ENCODE measurements at regions of chr3 and their contacts with region 1.

Region 1: GRCh38 chr3:134485718-134486576 is at the starts of genes ANAPC13 and CEP63:
- DNase-seq: peak; percentile 93
- CTCF ChIP-seq: no peak

Region 2: DNA sequence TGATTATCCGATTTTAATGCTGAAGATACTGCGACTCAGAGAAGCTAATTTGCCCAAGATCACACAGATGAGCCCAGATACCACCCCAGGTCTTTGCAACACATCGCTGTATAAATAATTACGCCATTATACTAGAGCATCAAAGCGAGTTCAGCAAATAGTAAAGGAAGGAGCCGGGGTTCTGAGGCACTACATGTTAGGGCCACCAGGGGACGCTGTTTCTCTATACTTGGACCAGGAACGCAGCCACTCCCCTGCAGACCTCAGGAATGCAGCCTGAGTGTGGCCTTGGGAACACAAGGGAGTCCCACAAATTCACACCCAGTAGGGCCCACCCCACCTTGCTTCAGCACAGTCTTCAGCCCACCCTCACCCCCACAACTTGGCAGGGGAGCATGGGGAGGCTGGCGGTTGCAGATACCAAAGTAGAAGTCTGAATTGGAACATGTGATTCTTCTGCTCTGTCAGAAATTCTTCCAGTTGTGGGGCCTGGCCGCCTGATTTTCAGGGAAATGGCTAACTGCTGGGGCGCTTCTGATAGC is 177.5 kb before region 1 on chr3:
- CTCF ChIA-PET with region 1: interaction called, 154 read pairs
- POLR2A ChIA-PET with region 1: interaction called, 5 read pairs
- DNase-seq: peak; percentile 75
- CTCF ChIP-seq: peak; percentile 97

Region 3: DNA sequence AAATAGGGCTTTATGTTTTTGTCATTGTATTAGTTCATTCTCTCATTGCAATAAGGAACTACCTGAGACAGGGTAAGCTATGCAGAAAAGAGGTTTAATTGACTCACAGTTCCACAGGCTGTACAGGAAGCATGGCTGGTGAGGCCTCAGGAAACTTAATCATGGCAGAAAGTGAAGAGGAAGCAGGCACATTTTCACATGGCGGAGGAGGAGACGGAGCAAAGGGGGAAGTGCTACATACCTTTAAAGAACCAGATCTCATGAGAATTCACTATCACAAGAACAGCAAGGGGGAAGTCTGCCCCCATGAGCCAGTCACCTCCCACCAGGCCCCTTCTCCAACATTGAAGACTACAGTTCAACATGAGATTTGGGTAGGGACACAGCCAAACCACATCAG is 25.6 kb after region 1 on chr3:
- CTCF ChIA-PET with region 1: no interaction called
- POLR2A ChIA-PET with region 1: no interaction called
- DNase-seq: no peak
- CTCF ChIP-seq: no peak

Measured in GM10248 (cell line).